Activated B cell treated with CpG ODN at 0.5 μM for 24 hours (primary cell): ENCODE measurements at regions of chr19 and their contacts with region 1.

Region 1: DNA sequence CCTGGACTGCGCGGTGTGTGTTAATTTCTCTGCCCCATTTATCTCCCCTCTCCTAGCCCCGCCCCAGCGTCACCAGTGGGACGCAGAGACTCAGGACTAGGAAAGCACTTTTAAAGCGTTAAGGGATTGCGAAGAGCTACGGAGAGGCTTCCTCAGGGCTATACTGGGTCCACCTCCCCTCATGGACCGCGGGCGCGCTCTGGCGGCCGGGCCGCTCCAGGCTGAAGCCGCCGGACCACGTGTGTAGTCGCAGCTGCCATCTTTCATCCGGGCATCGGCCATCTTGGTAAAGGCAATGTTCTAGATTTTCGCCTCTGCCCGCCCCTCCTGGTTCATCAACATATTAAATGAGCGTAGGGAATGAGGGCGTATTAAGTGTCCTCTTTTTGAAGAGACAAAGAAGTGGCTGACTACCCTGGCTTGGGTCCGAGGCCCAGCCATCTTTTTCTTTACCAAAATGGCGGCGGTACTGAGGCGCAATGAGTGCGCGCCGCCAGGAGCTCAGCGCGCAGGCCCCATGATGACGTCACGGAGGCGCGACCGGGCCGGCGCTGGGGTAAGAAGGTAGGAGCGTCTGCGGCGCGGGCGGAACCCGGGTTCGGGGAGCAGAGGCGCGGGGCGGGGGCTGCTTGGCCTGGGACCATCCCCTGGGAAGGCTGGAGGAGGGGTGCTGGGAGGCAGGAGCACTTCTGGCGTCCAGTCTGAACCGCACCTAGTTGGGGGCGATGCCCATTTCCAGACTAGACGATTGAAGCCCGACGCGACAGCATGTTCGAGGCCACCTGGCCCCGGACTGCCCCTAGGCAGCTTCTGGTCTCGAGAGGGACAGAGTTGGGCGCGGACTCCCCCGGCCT is at the start of gene CCDC124:
- DNase-seq: peak; percentile 87
- ATAC-seq: peak; percentile 96
- H3K4me3 Mint-ChIP-seq: peak within 1 kb of the TSS; percentile 88
- H3K27ac Mint-ChIP-seq: peak within 1 kb of the TSS; percentile 94
- H3K4me1 Mint-ChIP-seq: peaks cover 25% of the 10 kb centered on the region
- H3K27me3 Mint-ChIP-seq: no peaks in the 10 kb centered on the region
- CTCF ChIP-seq: no peak
- total RNA-seq, gene CCDC124: 49.9 and 59.5 TPM in 2 replicates

Region 2: GRCh38 chr19:17448131-17448967 is 484.4 kb before region 1 on chr19 and contains the start of gene TMEM221:
- CTCF ChIA-PET with region 1: no interaction called
- POLR2A ChIA-PET with region 1: no interaction called
- intact Hi-C with region 1: loop called (anchors 5 kb)
- DNase-seq: peak; percentile 49
- ATAC-seq: peak; percentile 86
- H3K4me3 Mint-ChIP-seq: peak within 1 kb of the TSS; percentile 19
- H3K27ac Mint-ChIP-seq: no peak within 1 kb of the TSS
- H3K4me1 Mint-ChIP-seq: peaks cover 10% of the 10 kb centered on the region
- H3K27me3 Mint-ChIP-seq: peaks cover 24% of the 10 kb centered on the region
- CTCF ChIP-seq: no peak
- total RNA-seq, gene TMEM221: not detected in 2 replicates

Region 3: GRCh38 chr19:17703824-17704463 is 228.8 kb before region 1 on chr19:
- CTCF ChIA-PET with region 1: interaction called, 3 read pairs
- POLR2A ChIA-PET with region 1: no interaction called
- intact Hi-C with region 1: loop called (anchors 2 kb)
- DNase-seq: peak; percentile 70
- ATAC-seq: peak; percentile 97
- H3K4me3 Mint-ChIP-seq: no peak overlapping the region
- H3K27ac Mint-ChIP-seq: no peak overlapping the region
- H3K4me1 Mint-ChIP-seq: peaks cover 2% of the 10 kb centered on the region
- H3K27me3 Mint-ChIP-seq: peaks cover 8% of the 10 kb centered on the region
- CTCF ChIP-seq: peak; percentile 64

Region 4: DNA sequence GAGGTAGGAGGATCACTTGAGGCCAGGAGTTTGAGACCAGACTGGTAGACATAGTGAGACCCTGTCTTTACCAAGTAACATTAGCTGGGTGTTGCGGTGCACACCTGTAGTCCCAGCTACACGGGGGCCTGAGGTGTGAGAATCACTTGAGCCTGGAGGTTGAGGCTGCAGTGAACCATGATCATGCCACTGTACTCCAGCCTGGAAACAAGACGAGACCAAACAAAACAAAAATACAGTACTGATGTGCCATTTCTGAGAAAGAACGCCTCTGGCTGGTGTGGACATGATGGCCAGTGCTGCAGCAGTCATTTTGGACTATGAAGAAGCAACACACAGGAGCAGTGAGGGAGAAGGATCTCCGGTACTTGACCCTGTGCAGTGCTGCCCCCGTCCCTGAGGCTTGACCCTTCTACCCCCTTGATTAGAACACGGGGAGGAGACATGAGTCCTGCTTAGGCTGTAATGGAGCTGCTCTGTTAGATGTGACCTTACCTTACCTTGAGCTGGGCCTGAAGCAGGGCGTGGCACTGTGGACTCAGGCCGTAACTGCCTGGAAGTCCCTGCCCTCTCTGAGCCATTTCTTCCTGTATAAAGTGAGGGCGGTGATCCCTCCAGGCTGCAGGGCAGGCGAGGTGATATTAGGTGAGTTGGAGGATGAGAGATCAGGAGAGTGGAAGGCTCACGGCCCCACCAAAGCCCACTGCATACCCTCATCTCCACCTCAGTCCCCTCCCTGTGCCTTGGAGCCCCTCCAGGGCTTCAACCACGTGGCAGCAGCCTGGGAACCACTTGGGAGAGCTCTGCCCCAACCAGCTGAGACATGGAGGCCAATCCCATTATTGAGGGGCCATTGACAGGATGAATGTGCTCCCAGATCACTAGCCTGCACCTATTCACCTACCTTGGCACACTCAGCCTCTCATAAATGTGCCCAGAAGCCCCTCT is 67.1 kb before region 1 on chr19:
- CTCF ChIA-PET with region 1: interaction called, 201 read pairs
- POLR2A ChIA-PET with region 1: interaction called, 299 read pairs
- intact Hi-C with region 1: loop called (anchors 1 kb)
- DNase-seq: no peak
- ATAC-seq: no peak
- H3K4me3 Mint-ChIP-seq: no peak overlapping the region
- H3K27ac Mint-ChIP-seq: no peak overlapping the region
- H3K4me1 Mint-ChIP-seq: peaks cover 30% of the 10 kb centered on the region
- H3K27me3 Mint-ChIP-seq: no peaks in the 10 kb centered on the region
- CTCF ChIP-seq: no peak

Region 5: DNA sequence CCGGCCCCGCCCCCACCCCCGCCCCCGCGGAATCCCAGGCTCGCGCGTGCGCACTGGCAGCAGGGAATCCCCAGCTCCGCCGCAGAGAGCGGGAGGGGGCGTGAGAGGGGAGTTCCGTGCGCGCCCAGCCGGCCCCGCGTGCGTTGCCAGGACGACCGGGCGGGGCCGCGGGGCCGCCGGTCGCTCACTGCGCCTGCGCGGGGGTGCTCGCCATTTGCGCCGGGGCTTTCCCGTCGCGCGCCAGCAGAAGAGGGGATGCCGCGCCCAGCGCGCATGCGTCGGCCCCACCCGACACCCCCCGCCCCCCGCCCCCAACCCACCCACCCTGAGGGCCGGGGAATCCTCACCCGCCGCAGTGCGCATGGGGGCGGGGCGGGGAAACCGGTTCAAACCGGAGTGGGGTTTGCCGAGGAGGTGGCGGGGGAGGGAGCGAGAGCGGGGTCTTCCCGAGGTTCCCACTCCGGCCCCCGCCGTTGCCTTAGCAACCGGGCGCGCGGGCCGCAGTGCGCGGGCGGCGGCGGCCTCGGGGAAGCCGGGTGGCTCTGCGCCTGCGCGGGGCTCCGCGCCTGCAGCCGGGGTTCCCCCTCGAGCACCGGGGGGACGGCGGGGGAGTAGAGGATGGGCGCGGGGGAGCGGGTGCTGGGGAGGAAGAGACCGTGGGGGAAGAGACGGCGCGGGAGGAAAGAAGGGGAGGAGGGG is 15.3 kb after region 1 on chr19:
- CTCF ChIA-PET with region 1: interaction called, 17 read pairs
- POLR2A ChIA-PET with region 1: interaction called, 14 read pairs
- intact Hi-C with region 1: no loop called
- DNase-seq: peak; percentile 98
- ATAC-seq: peak; percentile 63
- H3K4me3 Mint-ChIP-seq: peak overlapping the region; percentile 74
- H3K27ac Mint-ChIP-seq: no peak overlapping the region
- H3K4me1 Mint-ChIP-seq: peaks cover 59% of the 10 kb centered on the region
- H3K27me3 Mint-ChIP-seq: peaks cover 12% of the 10 kb centered on the region
- CTCF ChIP-seq: no peak